ENCODE measurements at regions of chr6 and their contacts with region 1.

Region 1: DNA sequence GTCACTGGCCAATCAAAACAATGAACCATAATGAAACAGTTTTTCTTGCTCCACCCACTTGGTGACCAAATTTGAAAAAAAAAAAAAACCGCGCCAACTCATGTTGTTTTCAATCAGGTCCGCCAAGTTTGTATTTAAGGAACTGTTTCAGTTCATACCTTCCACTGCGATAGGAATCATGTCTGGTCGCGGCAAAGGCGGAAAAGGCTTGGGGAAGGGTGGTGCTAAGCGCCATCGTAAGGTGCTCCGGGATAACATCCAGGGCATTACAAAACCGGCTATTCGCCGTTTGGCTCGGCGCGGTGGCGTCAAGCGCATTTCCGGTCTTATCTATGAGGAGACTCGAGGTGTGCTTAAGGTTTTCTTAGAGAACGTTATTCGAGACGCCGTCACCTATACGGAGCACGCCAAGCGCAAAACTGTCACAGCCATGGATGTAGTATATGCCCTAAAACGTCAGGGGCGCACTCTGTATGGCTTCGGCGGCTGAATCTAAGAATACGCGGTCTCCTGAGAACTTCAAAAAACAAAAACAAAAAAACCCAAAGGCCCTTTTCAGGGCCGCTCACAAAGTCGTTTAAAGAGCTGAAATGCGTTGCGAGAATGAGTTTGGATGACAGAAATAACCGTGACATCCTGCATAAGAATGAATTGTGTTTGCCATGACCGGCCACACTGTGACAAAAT is 16.7 kb downstream of the HFE start:
- DNase-seq: peak; percentile 92
- H3K4me3 ChIP-seq: peak overlapping the region; percentile 23 to 53 (median 32)
- H3K27ac ChIP-seq: peak overlapping the region; percentile 91 to 95 (median 93)
- H3K4me1 ChIP-seq: peaks cover 6 to 23% (median 13%) of the 10 kb centered on the region in 4 donors
- H3K27me3 ChIP-seq: no peaks in the 10 kb centered on the region
- CTCF ChIP-seq: peak; percentile 42 to 73 (median 54)
- EP300 ChIP-seq: peak; percentile 49
- POLR2A ChIP-seq: peak; percentile 100

Region 2: DNA sequence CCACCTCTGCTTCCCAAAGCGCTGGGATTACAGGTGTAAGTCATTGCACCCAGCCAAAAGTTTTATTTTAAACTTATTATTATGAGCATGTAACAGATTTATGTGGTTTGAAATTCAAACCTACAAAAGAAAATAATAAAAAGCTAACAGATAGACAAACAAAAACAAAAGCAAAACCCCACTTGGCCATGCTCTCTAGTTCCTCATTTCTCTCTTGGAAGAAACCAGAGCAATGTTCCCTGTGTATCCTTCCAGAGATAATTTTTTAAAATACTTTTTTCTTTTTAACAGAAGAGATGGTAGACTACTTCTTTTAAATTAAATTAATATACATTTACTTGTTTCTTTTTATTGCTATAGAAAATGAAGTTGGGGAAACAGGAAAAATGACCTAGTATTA is 201.8 kb before region 1 on chr6:
- in situ Hi-C with region 1: no loop called
- intact Hi-C with region 1: no loop called
- DNase-seq: no peak
- H3K4me3 ChIP-seq: no peak overlapping the region
- H3K27ac ChIP-seq: no peak overlapping the region
- H3K4me1 ChIP-seq: no peaks in the 10 kb centered on the region
- H3K27me3 ChIP-seq: no peaks in the 10 kb centered on the region
- CTCF ChIP-seq: no peak
- EP300 ChIP-seq: no peak
- POLR2A ChIP-seq: no peak

Region 3: GRCh38 chr6:26054857-26055669 is 48.9 kb before region 1 on chr6:
- in situ Hi-C with region 1: loop called in 3 of 4 experiments (anchors 5 kb)
- intact Hi-C with region 1: no loop called
- DNase-seq: peak; percentile 90
- H3K4me3 ChIP-seq: peak overlapping the region; percentile 45 to 90 (median 62)
- H3K27ac ChIP-seq: peak overlapping the region; percentile 92 to 100 (median 96)
- H3K4me1 ChIP-seq: peaks cover 0 to 39% (median 13%) of the 10 kb centered on the region in 4 donors
- H3K27me3 ChIP-seq: no peaks in the 10 kb centered on the region
- CTCF ChIP-seq: peak in 3 of 5 experiments; percentile 15 to 70 (median 66)
- EP300 ChIP-seq: no peak
- POLR2A ChIP-seq: peak; percentile 68

Measured in transverse colon (tissue), 4 donors.